Calu3 (cell line): ENCODE measurements at regions of chr18 and their contacts with region 1.

Region 1: DNA sequence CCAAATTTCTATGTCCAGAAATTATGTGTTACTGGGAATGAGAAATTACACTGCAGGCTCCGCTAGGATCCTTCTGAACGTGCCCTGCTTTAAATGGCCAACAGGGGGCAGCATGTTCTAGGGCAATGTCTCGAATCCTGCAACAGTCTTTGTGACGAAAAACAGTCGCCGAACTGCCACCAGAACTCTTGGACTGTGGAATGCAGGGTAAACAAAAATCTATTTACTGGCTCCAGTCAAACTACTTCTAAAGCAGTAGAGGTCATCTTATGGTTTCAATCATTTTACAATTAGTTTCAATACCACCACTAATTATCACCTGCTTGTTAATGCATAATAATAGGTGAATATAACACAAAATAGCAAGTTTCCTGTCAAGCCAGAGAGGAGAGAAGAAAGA is 9.8 kb upstream of the ZNF397 start:
- DNase-seq: peak; percentile 81
- H3K4me3 Mint-ChIP-seq: peak overlapping the region; percentile 21
- H3K27ac Mint-ChIP-seq: no peak overlapping the region
- H3K4me1 Mint-ChIP-seq: no peaks in the 10 kb centered on the region
- H3K27me3 Mint-ChIP-seq: no peaks in the 10 kb centered on the region
- CTCF ChIP-seq: peak; percentile 83

Region 2: DNA sequence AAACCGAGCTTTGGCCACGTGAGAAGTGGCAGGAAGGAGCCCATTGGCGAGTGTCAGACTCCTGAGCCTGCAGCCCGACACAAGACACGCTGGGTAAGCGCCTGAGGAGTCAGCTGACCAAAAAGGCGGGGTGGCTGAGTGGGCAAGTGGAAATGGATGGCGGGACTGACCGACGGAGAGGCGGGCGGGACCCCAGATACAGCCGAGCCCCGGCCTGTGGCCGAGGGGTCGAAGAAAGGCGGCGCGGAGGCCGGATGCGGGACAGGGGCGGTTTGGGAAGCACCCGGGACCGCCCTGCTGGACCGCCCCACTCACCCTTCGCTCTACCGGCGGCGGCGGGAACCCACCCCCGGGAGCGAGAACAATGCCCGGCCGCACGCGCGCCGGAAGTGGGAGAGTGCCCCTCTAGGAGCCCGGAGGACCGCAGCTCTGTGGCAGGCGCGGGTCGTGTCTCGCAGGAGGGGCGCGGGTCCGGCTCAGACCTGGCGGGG is 36.2 kb after region 1 on chr18:
- CTCF ChIA-PET with region 1: no interaction called
- intact Hi-C with region 1: no loop called
- DNase-seq: no peak
- H3K4me3 Mint-ChIP-seq: no peak overlapping the region
- H3K27ac Mint-ChIP-seq: peak overlapping the region; percentile 53
- H3K4me1 Mint-ChIP-seq: no peaks in the 10 kb centered on the region
- H3K27me3 Mint-ChIP-seq: no peaks in the 10 kb centered on the region
- CTCF ChIP-seq: no peak

Region 3: GRCh38 chr18:35355140-35355618 is 124.1 kb after region 1 on chr18:
- CTCF ChIA-PET with region 1: interaction called, 4 read pairs
- intact Hi-C with region 1: loop called (anchors 1 kb)
- DNase-seq: peak; percentile 63
- H3K4me3 Mint-ChIP-seq: no peak overlapping the region
- H3K27ac Mint-ChIP-seq: no peak overlapping the region
- H3K4me1 Mint-ChIP-seq: no peaks in the 10 kb centered on the region
- H3K27me3 Mint-ChIP-seq: no peaks in the 10 kb centered on the region
- CTCF ChIP-seq: peak; percentile 35